Motor neuron (in vitro differentiated cells): ENCODE measurements at regions of chr15 and their contacts with region 1.

Region 1: GRCh38 chr15:89472785-89473256 is 23.6 kb downstream of the RHCG start:
- ATAC-seq: peak; percentile 43 to 99 (median 72)
- H3K4me3 ChIP-seq: no peak overlapping the region
- H3K27ac ChIP-seq: no peak overlapping the region
- H3K4me1 ChIP-seq: peaks cover 5 to 14% of the 10 kb centered on the region in 2 donors

Region 2: GRCh38 chr15:89358755-89359439 is 113.9 kb before region 1 on chr15:
- in situ Hi-C with region 1: loop called in 2 of 9 experiments (anchors 10 to 25 kb)
- ATAC-seq: peak; percentile 58 to 88 (median 70)
- H3K4me3 ChIP-seq: peak overlapping the region; percentile 42 to 90 (median 50)
- H3K27ac ChIP-seq: no peak overlapping the region
- H3K4me1 ChIP-seq: peaks cover 23 to 37% of the 10 kb centered on the region in 2 donors

Region 3: GRCh38 chr15:89958074-89958805 is 485.4 kb after region 1 on chr15:
- in situ Hi-C with region 1: no loop called
- ATAC-seq: no peak
- H3K4me3 ChIP-seq: no peak overlapping the region
- H3K27ac ChIP-seq: no peak overlapping the region
- H3K4me1 ChIP-seq: no peaks in the 10 kb centered on the region